ENCODE measurements at regions of chr13 and their contacts with region 1.

Region 1: DNA sequence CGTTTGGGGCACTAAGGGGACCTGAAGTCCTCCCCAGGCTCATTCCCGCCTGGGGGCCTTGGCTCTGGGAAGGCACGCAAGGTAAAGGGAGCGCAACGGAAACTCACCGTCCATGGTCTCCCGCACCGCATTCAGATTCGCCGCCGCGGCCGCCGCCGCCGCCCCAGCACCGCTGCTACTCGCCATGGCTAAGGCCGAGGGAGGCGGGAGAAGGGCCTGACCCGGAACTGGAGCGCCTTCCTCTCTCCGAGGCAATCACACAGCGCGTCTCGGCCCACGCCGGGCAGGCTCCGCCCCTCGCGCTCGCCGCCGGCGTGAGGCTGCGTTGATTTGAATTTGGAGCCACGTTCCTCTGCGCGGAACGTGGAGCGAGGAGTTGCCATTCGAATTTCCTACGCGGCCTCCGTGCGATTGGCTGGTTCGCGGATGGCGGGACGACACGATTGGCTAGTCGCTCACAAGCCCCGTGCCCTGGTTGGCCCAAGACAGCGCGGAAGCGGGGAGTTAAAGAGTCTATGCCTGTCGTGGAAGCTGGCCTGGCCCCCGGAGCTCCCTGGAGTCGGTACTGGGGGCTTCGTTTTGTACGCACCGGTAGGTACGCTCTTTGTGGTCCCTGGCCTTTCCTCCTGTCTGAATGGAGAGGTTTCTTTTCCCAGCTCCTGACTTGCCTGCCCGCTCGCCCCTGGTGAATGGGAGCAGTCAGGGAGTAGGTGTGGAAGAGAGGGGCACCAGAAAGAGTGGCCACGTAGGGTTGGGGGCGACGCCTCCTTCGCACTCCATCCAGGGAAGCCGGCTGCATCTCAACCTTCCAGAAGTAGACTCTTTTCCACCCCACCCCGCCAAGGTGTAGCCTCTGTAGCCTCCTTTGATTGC is at the starts of genes BORA and MZT1:
- DNase-seq: peak; percentile 97 to 98
- H3K4me3 ChIP-seq: peak within 1 kb of the TSS; percentile 100
- H3K4me3 Mint-ChIP-seq: peak within 1 kb of the TSS; percentile 92
- H3K27ac Mint-ChIP-seq: peak within 1 kb of the TSS; percentile 93
- H3K4me1 ChIP-seq: peaks cover 7% of the 10 kb centered on the region; the same call in 1 of the 2 replicates
- H3K4me1 Mint-ChIP-seq: peaks cover 6% of the 10 kb centered on the region
- H3K27me3 ChIP-seq: no peaks in the 10 kb centered on the region
- H3K27me3 Mint-ChIP-seq: no peaks in the 10 kb centered on the region
- CTCF ChIP-seq: no peak
- total RNA-seq, gene BORA: 25.8 and 27.5 TPM in 2 replicates
- total RNA-seq, gene MZT1: 20.1 and 22.9 TPM in 2 replicates

Region 2: DNA sequence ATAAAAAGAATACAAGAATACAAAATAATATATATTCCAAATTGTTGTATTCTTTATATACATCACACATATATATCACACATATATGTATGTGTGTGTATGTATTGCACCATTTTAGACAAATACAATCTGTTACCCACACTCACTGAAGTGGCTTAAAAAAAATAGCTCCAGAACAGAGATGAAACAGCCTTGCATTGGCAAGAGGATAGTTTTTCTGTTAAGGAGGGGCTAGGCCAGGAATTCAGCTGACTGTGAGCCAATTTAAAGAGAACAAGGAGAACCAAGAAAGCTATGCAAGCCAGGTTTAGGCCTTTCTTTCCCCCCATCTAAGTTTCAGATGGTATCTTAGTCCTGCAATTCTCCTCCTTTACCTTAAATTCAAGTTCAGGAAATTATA is 257.7 kb before region 1 on chr13:
- CTCF ChIA-PET with region 1: no interaction called
- POLR2A ChIA-PET with region 1: no interaction called
- intact Hi-C with region 1: no loop called
- DNase-seq: no peak
- H3K4me3 ChIP-seq: no peak overlapping the region
- H3K4me3 Mint-ChIP-seq: no peak overlapping the region
- H3K27ac Mint-ChIP-seq: no peak overlapping the region
- H3K4me1 ChIP-seq: no peaks in the 10 kb centered on the region
- H3K4me1 Mint-ChIP-seq: no peaks in the 10 kb centered on the region
- H3K27me3 ChIP-seq: no peaks in the 10 kb centered on the region
- H3K27me3 Mint-ChIP-seq: peaks cover 11% of the 10 kb centered on the region
- CTCF ChIP-seq: no peak

Region 3: GRCh38 chr13:72514146-72514545 is 213.5 kb before region 1 on chr13:
- CTCF ChIA-PET with region 1: no interaction called
- POLR2A ChIA-PET with region 1: no interaction called
- intact Hi-C with region 1: no loop called
- DNase-seq: no peak
- H3K4me3 ChIP-seq: no peak overlapping the region
- H3K4me3 Mint-ChIP-seq: no peak overlapping the region
- H3K27ac Mint-ChIP-seq: no peak overlapping the region
- H3K4me1 ChIP-seq: no peaks in the 10 kb centered on the region
- H3K4me1 Mint-ChIP-seq: no peaks in the 10 kb centered on the region
- H3K27me3 ChIP-seq: peaks cover 2% of the 10 kb centered on the region
- H3K27me3 Mint-ChIP-seq: peaks cover 16% of the 10 kb centered on the region
- CTCF ChIP-seq: no peak

Region 4: GRCh38 chr13:72637561-72637960 is 90.1 kb before region 1 on chr13:
- CTCF ChIA-PET with region 1: no interaction called
- POLR2A ChIA-PET with region 1: no interaction called
- intact Hi-C with region 1: no loop called
- DNase-seq: no peak
- H3K4me3 ChIP-seq: no peak overlapping the region
- H3K4me3 Mint-ChIP-seq: no peak overlapping the region
- H3K27ac Mint-ChIP-seq: no peak overlapping the region
- H3K4me1 ChIP-seq: no peaks in the 10 kb centered on the region
- H3K4me1 Mint-ChIP-seq: no peaks in the 10 kb centered on the region
- H3K27me3 ChIP-seq: no peaks in the 10 kb centered on the region
- H3K27me3 Mint-ChIP-seq: peaks cover 10% of the 10 kb centered on the region
- CTCF ChIP-seq: no peak

Region 5: DNA sequence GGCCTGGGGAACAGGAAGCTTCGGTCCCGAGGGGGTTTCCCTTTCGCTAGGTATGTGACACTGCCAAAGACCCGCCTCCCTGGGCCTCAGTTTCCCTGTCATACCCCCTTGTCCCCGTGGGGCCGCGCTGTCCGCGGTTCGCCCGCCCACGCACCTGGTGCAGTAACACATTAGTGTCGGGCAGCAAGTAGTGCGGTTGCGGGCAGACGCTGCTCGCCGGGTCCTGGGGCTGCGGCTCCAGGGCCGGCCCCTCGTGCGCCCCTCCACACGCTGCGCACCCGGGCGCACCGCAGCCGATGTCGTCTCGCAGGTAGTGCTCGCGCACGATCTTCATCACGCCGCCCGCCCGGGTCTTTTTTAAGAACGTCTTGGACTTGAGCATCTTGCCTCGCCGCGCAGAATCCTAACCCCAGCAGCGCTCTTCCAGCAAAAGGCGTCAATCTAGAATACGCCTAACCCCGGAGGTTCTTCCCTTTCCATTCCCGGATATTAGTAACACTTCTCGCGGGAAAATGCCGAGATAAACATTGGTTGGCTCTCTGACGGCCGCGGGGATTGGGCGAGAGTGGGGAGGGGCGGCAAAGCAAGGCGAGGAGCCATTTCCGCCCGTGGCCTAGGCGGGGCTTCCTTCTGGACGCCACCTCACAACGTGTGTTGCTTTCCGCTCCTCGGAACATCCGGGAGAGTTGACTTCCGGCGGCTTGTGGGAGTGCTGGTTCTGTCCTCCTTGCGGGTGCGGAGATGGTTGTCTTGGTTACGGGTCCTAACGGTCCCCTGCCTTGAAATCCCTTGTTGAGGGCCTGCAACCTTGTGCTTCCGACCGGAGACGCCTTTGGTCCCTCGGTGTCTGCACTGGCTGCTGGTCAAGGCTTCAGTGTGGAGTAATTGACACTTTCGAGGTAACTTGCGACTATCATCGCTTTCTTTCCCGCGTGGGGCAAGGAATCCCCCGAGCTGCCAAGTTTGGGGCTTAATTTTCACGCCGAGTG is 54.1 kb after region 1 on chr13 and contains the starts of genes DIS3 and PIBF1:
- CTCF ChIA-PET with region 1: no interaction called
- POLR2A ChIA-PET with region 1: no interaction called
- intact Hi-C with region 1: loop called (anchors 1 kb)
- DNase-seq: peak; percentile 99
- H3K4me3 ChIP-seq: peak within 1 kb of the TSS; percentile 98
- H3K4me3 Mint-ChIP-seq: peak within 1 kb of the TSS; percentile 98
- H3K27ac Mint-ChIP-seq: peak within 1 kb of the TSS; percentile 99
- H3K4me1 ChIP-seq: peaks cover 8% of the 10 kb centered on the region
- H3K4me1 Mint-ChIP-seq: no peaks in the 10 kb centered on the region
- H3K27me3 ChIP-seq: no peaks in the 10 kb centered on the region
- H3K27me3 Mint-ChIP-seq: no peaks in the 10 kb centered on the region
- CTCF ChIP-seq: no peak
- total RNA-seq, gene DIS3: 37.6 and 38.4 TPM in 2 replicates
- total RNA-seq, gene PIBF1: 13.4 and 18.6 TPM in 2 replicates

Region 6: GRCh38 chr13:72931311-72931710 is 203.7 kb after region 1 on chr13:
- CTCF ChIA-PET with region 1: no interaction called
- POLR2A ChIA-PET with region 1: no interaction called
- intact Hi-C with region 1: no loop called
- DNase-seq: no peak
- H3K4me3 ChIP-seq: no peak overlapping the region
- H3K4me3 Mint-ChIP-seq: no peak overlapping the region
- H3K27ac Mint-ChIP-seq: no peak overlapping the region
- H3K4me1 ChIP-seq: peaks cover 5% of the 10 kb centered on the region; the same call in 1 of the 2 replicates
- H3K4me1 Mint-ChIP-seq: no peaks in the 10 kb centered on the region
- H3K27me3 ChIP-seq: no peaks in the 10 kb centered on the region
- H3K27me3 Mint-ChIP-seq: no peaks in the 10 kb centered on the region
- CTCF ChIP-seq: no peak

Measured in Caco-2 (cell line).